ENCODE measurements at regions of chr6 and their contacts with region 1.

Region 1: GRCh38 chr6:70369332-70369950 is 43.9 kb upstream of the FAM135A start:
- DNase-seq: peak; percentile 45
- H3K4me3 ChIP-seq: no peak overlapping the region
- H3K27ac ChIP-seq: no peak overlapping the region
- H3K4me1 ChIP-seq: no peaks in the 10 kb centered on the region
- H3K27me3 ChIP-seq: peaks cover 15% of the 10 kb centered on the region
- CTCF ChIP-seq: peak; percentile 95

Region 2: DNA sequence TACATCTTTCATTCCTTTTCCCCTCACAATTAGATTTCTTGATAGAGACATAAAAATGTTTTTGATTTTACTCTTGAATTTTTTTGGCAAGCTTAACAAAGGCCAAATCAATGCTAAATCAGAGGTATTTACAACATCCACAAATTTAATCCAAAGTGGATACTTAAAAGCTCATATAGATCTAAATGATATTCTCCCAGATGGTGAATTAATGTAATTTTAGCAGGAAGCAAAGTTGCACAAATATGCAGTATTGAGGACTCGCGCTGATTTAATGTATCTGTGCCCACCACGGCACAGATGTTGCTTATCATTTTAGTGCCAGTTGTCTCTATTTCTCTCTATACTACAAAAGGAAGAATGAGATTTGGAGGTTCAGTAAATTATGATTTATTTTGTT is 335.7 kb before region 1 on chr6:
- intact Hi-C with region 1: no loop called
- DNase-seq: no peak
- H3K4me3 ChIP-seq: no peak overlapping the region
- H3K27ac ChIP-seq: no peak overlapping the region
- H3K4me1 ChIP-seq: no peaks in the 10 kb centered on the region
- H3K27me3 ChIP-seq: no peaks in the 10 kb centered on the region
- CTCF ChIP-seq: no peak

Region 3: GRCh38 chr6:70221025-70221714 is 148.3 kb before region 1 on chr6:
- intact Hi-C with region 1: loop called (anchors 10 kb)
- DNase-seq: no peak
- H3K4me3 ChIP-seq: no peak overlapping the region
- H3K27ac ChIP-seq: no peak overlapping the region
- H3K4me1 ChIP-seq: no peaks in the 10 kb centered on the region
- H3K27me3 ChIP-seq: peaks cover 12% of the 10 kb centered on the region
- CTCF ChIP-seq: peak; percentile 86

Region 4: DNA sequence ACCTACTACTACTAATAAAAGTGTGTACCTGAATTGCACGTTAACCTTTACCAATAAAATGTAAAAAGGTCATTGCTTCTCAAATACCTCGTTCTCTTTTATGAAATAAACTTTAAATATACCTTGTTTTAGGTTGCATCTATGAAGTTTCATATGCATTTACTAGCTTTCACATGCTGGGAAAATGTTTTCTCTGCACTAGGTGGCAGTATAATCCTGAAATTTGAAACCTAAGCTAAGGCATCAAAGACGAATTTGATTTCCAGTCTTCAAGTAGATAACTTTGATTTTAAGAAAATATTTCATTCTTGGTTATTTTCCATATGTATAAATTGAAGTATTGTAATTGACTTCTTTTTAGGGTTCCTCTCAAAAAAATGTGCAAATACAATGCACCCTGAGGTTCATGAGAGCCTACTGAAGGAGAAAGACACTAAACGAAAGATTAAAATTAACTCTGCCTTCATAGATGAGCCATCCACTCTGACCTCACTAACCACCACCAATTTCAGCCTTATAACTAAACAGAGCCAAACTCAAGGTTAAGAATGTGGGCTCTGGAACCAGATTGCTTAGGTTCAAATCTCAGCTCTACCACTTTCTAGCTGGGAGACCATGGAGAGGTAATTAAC is 59.3 kb before region 1 on chr6:
- intact Hi-C with region 1: loop called (anchors 10 kb)
- DNase-seq: no peak
- H3K4me3 ChIP-seq: no peak overlapping the region
- H3K27ac ChIP-seq: no peak overlapping the region
- H3K4me1 ChIP-seq: no peaks in the 10 kb centered on the region
- H3K27me3 ChIP-seq: peaks cover 19% of the 10 kb centered on the region
- CTCF ChIP-seq: peak; percentile 69

Region 5: DNA sequence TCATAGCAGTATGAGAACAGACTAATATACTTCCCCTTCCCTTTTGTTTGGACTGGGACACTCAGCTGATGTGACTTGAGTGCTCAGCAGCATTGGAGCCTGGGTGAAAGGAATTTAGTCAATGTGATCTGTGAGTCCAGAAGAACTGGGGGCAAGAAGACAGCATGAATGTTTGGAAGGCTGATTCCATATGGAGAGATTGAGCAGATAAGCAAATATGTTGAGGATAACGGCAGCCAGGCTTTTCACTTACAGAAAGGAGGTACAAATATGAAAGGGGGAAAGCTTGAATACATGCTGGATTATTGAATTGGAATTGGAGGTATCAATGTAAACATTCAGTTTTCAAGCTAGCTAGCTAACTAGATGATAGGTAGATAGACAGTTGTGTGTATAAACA is 260.5 kb after region 1 on chr6:
- intact Hi-C with region 1: no loop called
- DNase-seq: no peak
- H3K4me3 ChIP-seq: no peak overlapping the region
- H3K27ac ChIP-seq: no peak overlapping the region
- H3K4me1 ChIP-seq: no peaks in the 10 kb centered on the region
- H3K27me3 ChIP-seq: no peaks in the 10 kb centered on the region
- CTCF ChIP-seq: no peak

Measured in left ventricle myocardium inferior (tissue), 1 donor.